Mammary epithelial cell (primary cell): ENCODE measurements at regions of chr4 and their contacts with region 1.

Region 1: DNA sequence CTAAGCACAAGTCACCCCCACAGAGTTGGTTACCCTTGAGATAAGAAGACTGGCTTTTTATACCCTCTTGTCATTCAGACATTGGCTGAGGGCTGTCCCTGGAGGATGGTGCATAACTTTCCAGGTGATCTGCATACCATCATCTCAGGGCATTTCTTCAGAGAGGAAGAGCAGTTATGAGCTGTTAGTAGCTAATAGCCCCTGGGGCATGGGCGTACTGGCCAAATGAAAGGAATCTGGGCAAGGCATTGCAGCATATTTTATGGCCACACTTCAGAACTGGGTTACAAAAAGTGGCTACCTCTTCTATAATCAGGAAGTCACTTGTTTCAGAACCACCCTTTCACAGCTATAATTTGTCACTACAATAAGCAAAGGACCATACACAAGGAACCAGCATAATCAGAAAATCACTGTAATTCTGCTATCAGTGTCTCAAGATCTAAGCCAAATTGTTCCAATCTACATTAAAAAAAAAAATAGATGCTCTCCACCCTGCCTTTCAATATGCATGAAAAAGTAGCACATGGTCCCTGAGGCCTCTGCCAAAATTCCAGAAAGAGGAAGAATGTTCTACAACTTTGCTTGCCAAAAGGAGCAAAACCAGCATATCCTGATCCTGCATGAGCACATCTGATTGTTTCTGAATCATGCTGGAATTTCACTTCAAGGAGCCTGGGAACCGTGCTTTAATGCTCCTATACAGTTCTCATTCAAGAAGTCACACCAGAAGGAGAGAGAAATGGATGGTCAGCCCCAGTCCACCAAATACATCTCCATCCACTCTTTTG is 92.0 kb downstream of the TMEM144 start:
- DNase-seq: peak; percentile 76
- H3K4me3 ChIP-seq: no peak overlapping the region
- H3K27ac ChIP-seq: peak overlapping the region; percentile 78
- H3K4me1 ChIP-seq: peaks cover 26% of the 10 kb centered on the region
- H3K27me3 ChIP-seq: no peaks in the 10 kb centered on the region
- CTCF ChIP-seq: no peak

Region 2: GRCh38 chr4:158219623-158220022 is 82.6 kb before region 1 on chr4:
- CTCF ChIA-PET with region 1: no interaction called
- dilution Hi-C with region 1: no loop called
- in situ Hi-C with region 1: no loop called
- intact Hi-C with region 1: no loop called
- DNase-seq: no peak
- H3K4me3 ChIP-seq: no peak overlapping the region
- H3K27ac ChIP-seq: no peak overlapping the region
- H3K4me1 ChIP-seq: no peaks in the 10 kb centered on the region
- H3K27me3 ChIP-seq: no peaks in the 10 kb centered on the region
- CTCF ChIP-seq: no peak

Region 3: GRCh38 chr4:158356301-158356700 is 54.0 kb after region 1 on chr4:
- CTCF ChIA-PET with region 1: no interaction called
- dilution Hi-C with region 1: no loop called
- in situ Hi-C with region 1: no loop called
- intact Hi-C with region 1: no loop called
- DNase-seq: no peak
- H3K4me3 ChIP-seq: no peak overlapping the region
- H3K27ac ChIP-seq: no peak overlapping the region
- H3K4me1 ChIP-seq: no peaks in the 10 kb centered on the region
- H3K27me3 ChIP-seq: no peaks in the 10 kb centered on the region
- CTCF ChIP-seq: no peak

Region 4: DNA sequence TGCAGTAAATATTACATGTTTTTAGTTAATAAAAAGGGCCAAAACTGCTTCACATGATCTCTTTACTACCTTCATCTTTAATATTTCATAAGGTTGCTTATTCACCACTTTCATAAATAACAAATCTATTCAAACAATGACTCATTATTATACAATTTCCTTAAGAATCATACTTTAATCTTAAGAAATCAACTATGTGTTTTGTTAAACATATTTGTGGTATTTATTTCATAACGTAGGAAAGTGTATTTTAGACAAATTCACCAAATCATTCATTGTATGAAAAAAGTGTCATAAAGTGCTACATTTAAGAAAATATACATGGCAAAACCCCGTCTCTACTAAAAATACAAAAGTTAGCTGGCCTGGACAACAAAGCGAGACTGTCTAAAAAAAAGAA is 68.9 kb after region 1 on chr4:
- CTCF ChIA-PET with region 1: no interaction called
- dilution Hi-C with region 1: no loop called
- in situ Hi-C with region 1: no loop called
- intact Hi-C with region 1: loop called (anchors 5 kb)
- DNase-seq: peak; percentile 48
- H3K4me3 ChIP-seq: no peak overlapping the region
- H3K27ac ChIP-seq: peak overlapping the region; percentile 34
- H3K4me1 ChIP-seq: peaks cover 25% of the 10 kb centered on the region
- H3K27me3 ChIP-seq: no peaks in the 10 kb centered on the region
- CTCF ChIP-seq: no peak

Region 5: GRCh38 chr4:158521484-158522088 is 219.3 kb after region 1 on chr4 and contains the start of gene RXFP1:
- CTCF ChIA-PET with region 1: no interaction called
- dilution Hi-C with region 1: no loop called
- in situ Hi-C with region 1: no loop called
- intact Hi-C with region 1: no loop called
- DNase-seq: no peak
- H3K4me3 ChIP-seq: no peak within 1 kb of the TSS
- H3K27ac ChIP-seq: no peak within 1 kb of the TSS
- H3K4me1 ChIP-seq: peaks cover 11% of the 10 kb centered on the region
- H3K27me3 ChIP-seq: no peaks in the 10 kb centered on the region
- CTCF ChIP-seq: no peak
- total RNA-seq, gene RXFP1: not detected